CD4-positive, alpha-beta T cell (primary cell): ENCODE measurements at regions of chr7 and their contacts with region 1.

Region 1: DNA sequence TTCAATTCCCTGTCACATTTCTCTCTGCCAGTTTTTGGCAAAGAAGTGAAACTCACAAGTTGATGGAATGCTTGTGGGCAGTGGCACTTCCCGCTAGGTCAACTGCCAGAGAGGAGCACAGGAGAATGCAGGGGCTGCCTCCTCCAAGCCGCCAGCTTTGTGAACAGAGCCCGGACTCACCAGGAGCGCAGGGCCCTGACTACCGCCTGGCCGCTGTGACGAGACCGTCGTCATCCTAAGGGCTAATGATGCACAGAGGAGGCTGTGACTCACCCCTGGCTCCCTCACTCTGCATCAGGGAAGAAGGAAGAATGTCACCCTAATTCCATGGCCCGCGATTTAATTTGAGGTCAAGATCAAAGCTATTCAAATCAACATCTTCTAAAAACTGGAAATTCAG is 123.9 kb downstream of the TAX1BP1 start:
- DNase-seq: no peak
- ATAC-seq: no peak
- H3K4me3 ChIP-seq: no peak overlapping the region
- H3K4me3 Mint-ChIP-seq: no peak overlapping the region
- H3K27ac ChIP-seq: no peak overlapping the region
- H3K27ac Mint-ChIP-seq: no peak overlapping the region
- H3K4me1 ChIP-seq: no peaks in the 10 kb centered on the region
- H3K4me1 Mint-ChIP-seq: no peaks in the 10 kb centered on the region
- H3K27me3 ChIP-seq: no peaks in the 10 kb centered on the region
- H3K27me3 Mint-ChIP-seq: no peaks in the 10 kb centered on the region
- CTCF ChIP-seq: no peak

Region 2: GRCh38 chr7:26667500-26668133 is 1196.3 kb before region 1 on chr7:
- CTCF ChIA-PET with region 1: no interaction called
- POLR2A ChIA-PET with region 1: no interaction called
- intact Hi-C with region 1: loop called in 1 of 2 experiments (anchors 5 kb)
- DNase-seq: peak in 12 of 14 experiments; percentile 15 to 82 (median 30)
- ATAC-seq: peak; percentile 61
- H3K4me3 ChIP-seq: no peak overlapping the region
- H3K4me3 Mint-ChIP-seq: no peak overlapping the region
- H3K27ac ChIP-seq: no peak overlapping the region
- H3K27ac Mint-ChIP-seq: no peak overlapping the region
- H3K4me1 ChIP-seq: no peaks in the 10 kb centered on the region
- H3K4me1 Mint-ChIP-seq: peaks cover 19% of the 10 kb centered on the region
- H3K27me3 ChIP-seq: no peaks in the 10 kb centered on the region
- H3K27me3 Mint-ChIP-seq: peaks cover 15% of the 10 kb centered on the region
- CTCF ChIP-seq: peak; percentile 75

Region 3: GRCh38 chr7:28041491-28042314 is 177.8 kb after region 1 on chr7:
- CTCF ChIA-PET with region 1: no interaction called
- POLR2A ChIA-PET with region 1: no interaction called
- intact Hi-C with region 1: no loop called
- DNase-seq: no peak
- ATAC-seq: no peak
- H3K4me3 ChIP-seq: no peak overlapping the region
- H3K4me3 Mint-ChIP-seq: no peak overlapping the region
- H3K27ac ChIP-seq: no peak overlapping the region
- H3K27ac Mint-ChIP-seq: no peak overlapping the region
- H3K4me1 ChIP-seq: no peaks in the 10 kb centered on the region
- H3K4me1 Mint-ChIP-seq: peaks cover 10% of the 10 kb centered on the region
- H3K27me3 ChIP-seq: no peaks in the 10 kb centered on the region
- H3K27me3 Mint-ChIP-seq: no peaks in the 10 kb centered on the region
- CTCF ChIP-seq: no peak

Region 4: GRCh38 chr7:28258240-28258639 is 394.4 kb after region 1 on chr7:
- CTCF ChIA-PET with region 1: no interaction called
- POLR2A ChIA-PET with region 1: no interaction called
- intact Hi-C with region 1: no loop called
- DNase-seq: no peak
- ATAC-seq: no peak
- H3K4me3 ChIP-seq: no peak overlapping the region
- H3K4me3 Mint-ChIP-seq: no peak overlapping the region
- H3K27ac ChIP-seq: no peak overlapping the region
- H3K27ac Mint-ChIP-seq: no peak overlapping the region
- H3K4me1 ChIP-seq: no peaks in the 10 kb centered on the region
- H3K4me1 Mint-ChIP-seq: no peaks in the 10 kb centered on the region
- H3K27me3 ChIP-seq: peaks cover 4% of the 10 kb centered on the region in 2 experiments
- H3K27me3 Mint-ChIP-seq: peaks cover 27% of the 10 kb centered on the region
- CTCF ChIP-seq: no peak

Region 5: DNA sequence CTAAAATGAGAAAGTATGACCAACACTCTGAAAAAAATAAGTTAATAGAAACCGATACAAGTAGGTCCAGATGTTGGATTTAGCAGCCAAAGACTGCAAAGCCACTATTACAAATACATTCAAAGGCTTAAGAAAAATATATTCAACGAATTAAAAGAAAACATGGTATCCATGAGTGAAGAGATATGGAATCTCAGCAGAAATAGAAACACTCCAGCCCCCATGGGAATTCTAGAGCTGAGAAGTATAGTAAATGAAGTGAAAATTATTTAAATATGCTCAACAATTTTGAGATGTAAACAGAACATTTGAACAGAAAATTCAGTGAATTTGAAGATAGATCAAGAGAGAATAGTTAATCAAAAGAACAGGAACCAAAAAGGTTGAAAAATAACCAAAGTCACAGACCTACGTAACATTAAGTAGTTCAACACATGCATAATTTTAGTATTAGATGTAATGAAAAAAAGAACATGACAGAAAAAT is 1870.4 kb after region 1 on chr7:
- CTCF ChIA-PET with region 1: no interaction called
- POLR2A ChIA-PET with region 1: no interaction called
- intact Hi-C with region 1: no loop called
- DNase-seq: no peak
- ATAC-seq: no peak
- H3K4me3 ChIP-seq: no peak overlapping the region
- H3K4me3 Mint-ChIP-seq: no peak overlapping the region
- H3K27ac ChIP-seq: no peak overlapping the region
- H3K27ac Mint-ChIP-seq: no peak overlapping the region
- H3K4me1 ChIP-seq: no peaks in the 10 kb centered on the region
- H3K4me1 Mint-ChIP-seq: no peaks in the 10 kb centered on the region
- H3K27me3 ChIP-seq: peaks cover 0 to 8% of the 10 kb centered on the region in 2 experiments
- H3K27me3 Mint-ChIP-seq: peaks cover 22% of the 10 kb centered on the region
- CTCF ChIP-seq: no peak